ENCODE measurements at regions of chr1 and their contacts with region 1.

Region 1: GRCh38 chr1:161165742-161166668 is at the start of gene PPOX:
- ATAC-seq: peak; percentile 91 to 96 (median 94)
- H3K4me3 ChIP-seq: peak within 1 kb of the TSS; percentile 64 to 87 (median 72)
- H3K27ac ChIP-seq: peak within 1 kb of the TSS; percentile 76 to 84
- H3K4me1 ChIP-seq: peaks cover 7 to 13% of the 10 kb centered on the region in 2 donors
- total RNA-seq, gene PPOX: 18.4 to 86.8 (median 39.6) TPM

Region 2: DNA sequence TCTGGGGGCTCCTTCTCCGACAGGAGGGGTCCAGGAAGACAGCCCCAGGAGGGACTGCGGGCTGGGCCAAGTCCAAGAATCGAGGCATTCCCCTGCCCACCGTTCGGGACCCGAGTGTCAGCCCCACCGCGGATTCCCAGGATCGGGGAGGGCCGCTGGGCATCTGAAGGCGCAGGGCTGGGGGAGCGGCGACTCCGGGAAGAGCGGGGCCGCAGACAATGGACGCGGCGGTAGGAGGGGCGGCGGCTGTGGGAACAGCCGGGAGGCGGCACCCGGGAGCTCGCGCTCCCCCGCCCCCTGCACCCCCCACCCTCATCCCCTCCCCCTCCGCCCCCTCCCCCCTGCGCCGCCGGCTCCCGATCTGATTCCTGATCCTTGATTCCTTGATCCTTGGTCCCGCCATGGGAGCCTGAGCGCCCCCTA is 765.8 kb before region 1 on chr1 and contains the start of gene VANGL2:
- in situ Hi-C with region 1: loop called in 1 of 9 experiments (anchors 25 kb)
- ATAC-seq: peak; percentile 67 to 77 (median 72)
- H3K4me3 ChIP-seq: peak within 1 kb of the TSS; percentile 83 to 97 (median 89)
- H3K27ac ChIP-seq: peak within 1 kb of the TSS; percentile 91 to 98
- H3K4me1 ChIP-seq: peaks cover 31 to 40% of the 10 kb centered on the region in 2 donors
- total RNA-seq, gene VANGL2: 0.46 to 98.3 (median 54.1) TPM

Measured in motor neuron (in vitro differentiated cells).